ENCODE measurements at regions of chr4 and their contacts with region 1.

Region 1: GRCh38 chr4:103008875-103009729 is 10.4 kb downstream of the SLC9B1 start:
- DNase-seq: peak in 1 of 2 donors; percentile 23
- ATAC-seq: peak; percentile 47 to 89 (median 78)
- H3K4me3 ChIP-seq: no peak overlapping the region
- H3K27ac ChIP-seq: no peak overlapping the region
- H3K4me1 ChIP-seq: peaks cover 0 to 15% (median 11%) of the 10 kb centered on the region in 9 donors
- H3K27me3 ChIP-seq: no peaks in the 10 kb centered on the region
- CTCF ChIP-seq: peak; percentile 60 to 94 (median 81)

Region 2: GRCh38 chr4:102430461-102430910 is 578.6 kb before region 1 on chr4:
- intact Hi-C with region 1: loop called in 2 of 10 experiments (anchors 5 to 10 kb)
- DNase-seq: no peak
- ATAC-seq: peak in 2 of 8 donors; percentile 32 to 34
- H3K4me3 ChIP-seq: peak overlapping the region; percentile 37 to 66 (median 58)
- H3K27ac ChIP-seq: peak overlapping the region in 8 of 10 donors; percentile 34 to 86 (median 62)
- H3K4me1 ChIP-seq: peaks cover 0 to 18% (median 0%) of the 10 kb centered on the region in 9 donors
- H3K27me3 ChIP-seq: no peaks in the 10 kb centered on the region
- CTCF ChIP-seq: no peak

Region 3: DNA sequence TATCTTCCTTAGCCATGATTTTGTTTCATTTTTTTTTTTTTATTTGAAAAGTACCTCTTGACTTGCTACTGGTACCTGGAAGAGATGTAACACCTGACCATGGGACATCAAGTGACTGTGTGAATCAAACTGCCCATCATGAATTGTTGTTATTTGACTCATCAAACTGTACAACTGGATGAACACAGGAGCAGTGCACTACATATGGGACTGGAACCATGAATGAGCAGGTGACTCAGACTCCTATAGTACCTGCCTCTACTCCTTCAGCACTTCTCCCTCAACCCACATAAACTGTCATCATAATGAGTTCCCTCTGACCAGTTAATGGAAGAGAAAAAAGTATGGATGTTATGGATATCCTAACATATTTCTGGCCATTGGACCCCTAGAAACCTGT is 165.8 kb before region 1 on chr4:
- intact Hi-C with region 1: loop called in 1 of 10 experiments (anchors 10 kb)
- DNase-seq: no peak
- ATAC-seq: no peak
- H3K4me3 ChIP-seq: no peak overlapping the region
- H3K27ac ChIP-seq: no peak overlapping the region
- H3K4me1 ChIP-seq: no peaks in the 10 kb centered on the region
- H3K27me3 ChIP-seq: no peaks in the 10 kb centered on the region
- CTCF ChIP-seq: no peak

Region 4: GRCh38 chr4:103150677-103151076 is 141.6 kb after region 1 on chr4:
- intact Hi-C with region 1: no loop called
- DNase-seq: no peak
- ATAC-seq: no peak
- H3K4me3 ChIP-seq: no peak overlapping the region
- H3K27ac ChIP-seq: no peak overlapping the region
- H3K4me1 ChIP-seq: no peaks in the 10 kb centered on the region
- H3K27me3 ChIP-seq: no peaks in the 10 kb centered on the region
- CTCF ChIP-seq: no peak